ENCODE measurements at regions of chr5 and their contacts with region 1.

Region 1: GRCh38 chr5:148469501-148469935 is 85.8 kb downstream of the FBXO38 start:
- DNase-seq: no peak
- ATAC-seq: no peak
- H3K4me3 Mint-ChIP-seq: no peak overlapping the region
- H3K27ac Mint-ChIP-seq: no peak overlapping the region
- H3K4me1 Mint-ChIP-seq: no peaks in the 10 kb centered on the region
- H3K27me3 Mint-ChIP-seq: no peaks in the 10 kb centered on the region
- CTCF ChIP-seq: no peak

Region 2: GRCh38 chr5:148314204-148314603 is 155.3 kb before region 1 on chr5:
- CTCF ChIA-PET with region 1: no interaction called
- POLR2A ChIA-PET with region 1: no interaction called
- intact Hi-C with region 1: no loop called
- DNase-seq: no peak
- ATAC-seq: no peak
- H3K4me3 Mint-ChIP-seq: no peak overlapping the region
- H3K27ac Mint-ChIP-seq: no peak overlapping the region
- H3K4me1 Mint-ChIP-seq: no peaks in the 10 kb centered on the region
- H3K27me3 Mint-ChIP-seq: peaks cover 2% of the 10 kb centered on the region
- CTCF ChIP-seq: no peak

Region 3: DNA sequence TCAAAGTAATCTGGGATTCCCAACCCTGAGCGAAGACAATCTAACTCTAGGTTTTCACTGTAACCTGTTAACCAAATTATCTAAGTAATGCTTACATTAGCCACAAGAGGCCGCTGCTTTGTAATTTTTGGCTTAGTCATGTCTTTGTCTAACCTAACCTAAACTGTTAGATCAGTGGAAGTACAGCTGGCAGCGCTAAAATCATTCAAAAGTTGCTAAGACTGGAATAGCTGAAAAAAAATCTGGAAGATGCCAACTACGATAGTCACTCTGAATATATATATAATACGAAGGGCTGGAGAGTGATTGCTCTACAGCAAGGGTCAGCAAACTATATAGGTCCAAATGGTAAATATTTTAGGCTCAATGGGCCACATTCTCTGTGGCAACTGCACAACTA is 25.5 kb before region 1 on chr5:
- CTCF ChIA-PET with region 1: interaction called, 10 read pairs
- POLR2A ChIA-PET with region 1: no interaction called
- intact Hi-C with region 1: no loop called
- DNase-seq: peak; percentile 52
- ATAC-seq: peak; percentile 88
- H3K4me3 Mint-ChIP-seq: no peak overlapping the region
- H3K27ac Mint-ChIP-seq: no peak overlapping the region
- H3K4me1 Mint-ChIP-seq: peaks cover 2% of the 10 kb centered on the region
- H3K27me3 Mint-ChIP-seq: no peaks in the 10 kb centered on the region
- CTCF ChIP-seq: peak; percentile 75

Region 4: DNA sequence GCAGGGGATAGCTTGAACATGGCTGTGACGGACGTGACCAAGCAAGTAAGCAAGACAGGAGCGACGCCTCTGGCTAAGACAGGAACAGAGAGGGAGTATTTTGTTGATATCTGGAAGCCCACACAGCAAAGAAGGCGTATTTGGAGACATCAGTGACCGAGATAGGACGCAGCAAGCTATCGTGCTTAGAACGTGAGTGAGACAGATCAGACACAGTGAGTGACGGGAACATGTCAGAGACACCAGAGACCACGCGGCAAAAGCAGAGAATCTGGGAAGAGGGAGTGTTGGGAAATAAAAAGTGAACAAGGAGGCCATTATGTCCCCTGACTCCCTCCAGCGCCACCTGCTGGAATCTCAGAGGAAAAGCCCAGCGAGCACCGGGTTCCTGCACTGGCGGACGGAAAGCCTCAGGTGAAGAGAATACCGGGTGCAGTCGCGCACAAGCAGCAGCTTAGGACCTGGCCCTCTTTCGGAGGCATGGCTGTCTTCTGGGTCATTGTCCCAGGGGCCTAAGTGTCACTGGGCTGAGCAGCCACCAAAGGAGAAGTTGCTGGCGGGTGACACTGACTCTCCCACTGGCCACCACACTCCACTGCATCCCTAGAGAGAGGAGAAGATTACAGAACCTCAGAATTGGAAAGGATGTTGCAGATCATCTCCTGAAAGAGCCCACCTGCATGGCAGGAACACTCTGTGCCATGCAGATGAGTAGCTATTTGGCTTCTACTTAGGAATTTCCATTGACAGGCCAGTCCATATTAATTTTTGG is 13.4 kb after region 1 on chr5:
- CTCF ChIA-PET with region 1: interaction called, 15 read pairs
- POLR2A ChIA-PET with region 1: no interaction called
- intact Hi-C with region 1: no loop called
- DNase-seq: peak; percentile 71
- ATAC-seq: peak; percentile 92
- H3K4me3 Mint-ChIP-seq: peak overlapping the region; percentile 32
- H3K27ac Mint-ChIP-seq: no peak overlapping the region
- H3K4me1 Mint-ChIP-seq: no peaks in the 10 kb centered on the region
- H3K27me3 Mint-ChIP-seq: peaks cover 24% of the 10 kb centered on the region
- CTCF ChIP-seq: peak; percentile 77